PC-9 (cell line): ENCODE measurements at regions of chr1 and their contacts with region 1.

Region 1: DNA sequence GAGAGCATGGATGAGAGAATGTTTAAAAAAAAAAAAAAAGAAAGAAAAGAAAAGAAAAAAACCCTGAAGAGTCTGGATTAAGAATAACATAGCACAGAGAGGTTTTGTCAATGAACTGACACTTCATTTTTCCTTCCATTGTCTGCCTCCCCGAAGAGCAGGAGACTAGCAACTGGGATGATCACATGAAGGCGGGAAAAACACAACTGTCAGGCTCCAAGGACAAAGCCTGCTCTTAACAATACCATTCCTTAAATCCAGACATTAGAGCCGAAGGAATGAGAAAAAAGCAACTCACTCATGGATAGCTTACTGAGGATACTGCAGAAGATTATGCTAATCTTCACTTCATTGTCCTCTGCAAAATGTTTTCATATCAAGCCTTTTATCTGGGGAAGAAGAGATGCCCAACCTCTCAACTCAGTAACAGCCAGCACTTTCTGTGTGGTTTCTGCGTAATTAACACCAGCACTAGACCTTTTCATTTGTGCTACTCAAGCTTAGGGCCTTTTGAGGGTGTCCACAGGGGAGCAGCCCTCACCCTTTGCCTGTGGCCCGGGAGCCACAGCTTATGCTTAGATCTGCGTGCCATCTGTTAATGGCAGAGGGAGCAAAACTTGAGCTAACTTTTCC is 182.3 kb downstream of the BARHL2 start:
- DNase-seq: peak in 1 of 2 experiments; percentile 21
- H3K4me3 ChIP-seq: no peak overlapping the region
- H3K27ac ChIP-seq: no peak overlapping the region
- H3K4me1 ChIP-seq: no peaks in the 10 kb centered on the region
- H3K27me3 ChIP-seq: no peaks in the 10 kb centered on the region
- CTCF ChIP-seq: no peak

Region 2: GRCh38 chr1:90480271-90480835 is 54.4 kb before region 1 on chr1:
- CTCF ChIA-PET with region 1: no interaction called
- POLR2A ChIA-PET with region 1: no interaction called
- intact Hi-C with region 1: loop called (anchors 2 kb)
- DNase-seq: no peak
- H3K4me3 ChIP-seq: no peak overlapping the region
- H3K27ac ChIP-seq: no peak overlapping the region
- H3K4me1 ChIP-seq: no peaks in the 10 kb centered on the region
- H3K27me3 ChIP-seq: no peaks in the 10 kb centered on the region
- CTCF ChIP-seq: no peak

Region 3: GRCh38 chr1:90501281-90501680 is 33.5 kb before region 1 on chr1:
- CTCF ChIA-PET with region 1: no interaction called
- POLR2A ChIA-PET with region 1: no interaction called
- intact Hi-C with region 1: no loop called
- DNase-seq: no peak
- H3K4me3 ChIP-seq: no peak overlapping the region
- H3K27ac ChIP-seq: no peak overlapping the region
- H3K4me1 ChIP-seq: peaks cover 8% of the 10 kb centered on the region
- H3K27me3 ChIP-seq: no peaks in the 10 kb centered on the region
- CTCF ChIP-seq: no peak

Region 4: DNA sequence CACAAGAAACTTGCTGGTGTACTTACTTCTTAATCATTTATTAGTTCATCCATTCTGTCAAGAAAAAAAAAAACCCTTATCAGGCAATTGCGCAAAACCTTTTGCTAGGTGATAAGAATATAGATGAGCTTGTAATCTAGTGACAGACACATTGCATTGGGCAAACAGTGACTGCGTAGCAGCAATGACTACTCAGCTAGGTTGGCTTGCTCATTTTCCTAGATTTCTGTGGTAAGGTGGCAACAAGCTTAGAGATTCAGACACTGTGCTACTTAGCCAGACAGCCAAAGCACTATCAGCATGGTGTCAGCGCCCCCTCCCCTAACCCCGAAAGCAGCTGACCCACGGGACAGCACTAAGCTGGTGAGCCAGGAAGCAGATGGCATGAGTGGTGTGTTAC is 20.8 kb before region 1 on chr1:
- CTCF ChIA-PET with region 1: no interaction called
- POLR2A ChIA-PET with region 1: no interaction called
- intact Hi-C with region 1: no loop called
- DNase-seq: no peak
- H3K4me3 ChIP-seq: no peak overlapping the region
- H3K27ac ChIP-seq: no peak overlapping the region
- H3K4me1 ChIP-seq: no peaks in the 10 kb centered on the region
- H3K27me3 ChIP-seq: no peaks in the 10 kb centered on the region
- CTCF ChIP-seq: no peak